CD4-positive, alpha-beta T cell (primary cell): ENCODE measurements at regions of chr5 and their contacts with region 1.

Region 1: GRCh38 chr5:39132128-39132447 is 57.9 kb upstream of the RICTOR start:
- DNase-seq: no peak
- ATAC-seq: no peak
- H3K4me3 ChIP-seq: no peak overlapping the region
- H3K4me3 Mint-ChIP-seq: no peak overlapping the region
- H3K27ac ChIP-seq: no peak overlapping the region
- H3K27ac Mint-ChIP-seq: peak overlapping the region; percentile 74
- H3K4me1 ChIP-seq: peaks cover 3% of the 10 kb centered on the region
- H3K4me1 Mint-ChIP-seq: peaks cover 78% of the 10 kb centered on the region
- H3K27me3 ChIP-seq: no peaks in the 10 kb centered on the region
- H3K27me3 Mint-ChIP-seq: no peaks in the 10 kb centered on the region
- CTCF ChIP-seq: no peak

Region 2: GRCh38 chr5:38948501-38948900 is 183.6 kb before region 1 on chr5:
- CTCF ChIA-PET with region 1: no interaction called
- POLR2A ChIA-PET with region 1: no interaction called
- intact Hi-C with region 1: loop called (anchors 5 kb)
- DNase-seq: no peak
- ATAC-seq: no peak
- H3K4me3 ChIP-seq: no peak overlapping the region
- H3K4me3 Mint-ChIP-seq: no peak overlapping the region
- H3K27ac ChIP-seq: no peak overlapping the region
- H3K27ac Mint-ChIP-seq: no peak overlapping the region
- H3K4me1 ChIP-seq: no peaks in the 10 kb centered on the region
- H3K4me1 Mint-ChIP-seq: no peaks in the 10 kb centered on the region
- H3K27me3 ChIP-seq: no peaks in the 10 kb centered on the region
- H3K27me3 Mint-ChIP-seq: no peaks in the 10 kb centered on the region
- CTCF ChIP-seq: no peak

Region 3: DNA sequence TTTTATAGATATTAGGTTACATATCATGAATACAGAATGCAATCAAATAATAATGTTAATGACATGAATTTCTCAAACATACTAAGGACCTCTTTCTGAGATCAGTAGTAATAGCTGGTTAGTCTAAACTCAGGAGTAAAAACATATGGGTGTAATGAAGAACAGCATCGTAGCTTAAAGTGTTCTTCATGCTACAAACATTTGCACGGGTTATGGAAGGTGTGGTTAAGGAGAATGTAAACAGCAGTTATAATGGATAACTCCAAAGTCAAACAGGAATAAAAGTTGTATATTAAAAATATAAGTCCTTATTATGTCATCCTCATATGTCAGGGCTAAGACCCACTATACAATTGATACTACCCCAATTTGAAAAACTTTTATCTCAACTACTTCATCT is 170.4 kb before region 1 on chr5:
- CTCF ChIA-PET with region 1: no interaction called
- POLR2A ChIA-PET with region 1: no interaction called
- intact Hi-C with region 1: loop called in 1 of 2 experiments (anchors 5 kb)
- DNase-seq: no peak
- ATAC-seq: no peak
- H3K4me3 ChIP-seq: no peak overlapping the region
- H3K4me3 Mint-ChIP-seq: no peak overlapping the region
- H3K27ac ChIP-seq: no peak overlapping the region
- H3K27ac Mint-ChIP-seq: no peak overlapping the region
- H3K4me1 ChIP-seq: no peaks in the 10 kb centered on the region
- H3K4me1 Mint-ChIP-seq: no peaks in the 10 kb centered on the region
- H3K27me3 ChIP-seq: no peaks in the 10 kb centered on the region
- H3K27me3 Mint-ChIP-seq: no peaks in the 10 kb centered on the region
- CTCF ChIP-seq: no peak

Region 4: DNA sequence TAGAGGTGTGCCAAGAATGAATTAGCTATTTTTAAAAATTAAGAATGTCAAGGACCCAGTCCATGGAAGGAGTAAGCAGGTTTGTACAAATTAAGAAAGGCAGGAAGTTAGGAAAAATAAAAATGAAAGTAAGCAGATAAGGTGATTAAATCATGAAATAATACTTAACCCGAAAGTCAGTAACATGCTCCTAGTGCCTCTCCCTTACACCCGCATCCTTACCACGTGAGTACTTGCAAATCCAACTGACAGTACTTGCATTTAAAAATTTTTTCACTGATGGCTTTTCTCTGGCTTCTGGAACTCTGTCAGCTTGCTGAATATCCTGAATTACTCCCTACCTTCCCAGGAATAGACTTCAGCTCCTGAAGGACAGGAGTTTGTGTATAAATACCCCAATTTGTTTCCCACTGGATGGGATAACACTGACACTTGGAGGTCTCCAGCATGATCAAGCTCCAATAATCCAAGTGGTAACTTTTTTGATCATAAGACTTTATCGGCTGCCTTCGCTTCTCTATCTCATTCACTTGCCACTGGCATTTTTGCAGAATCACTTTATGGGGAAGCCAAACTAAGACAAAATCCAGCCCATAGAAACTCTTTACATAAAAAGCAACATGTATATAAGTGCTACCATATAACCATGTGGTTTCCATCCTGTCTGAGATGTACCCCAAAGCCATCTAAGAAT is 16.3 kb before region 1 on chr5:
- CTCF ChIA-PET with region 1: interaction called, 4 read pairs
- POLR2A ChIA-PET with region 1: interaction called, 3 read pairs
- intact Hi-C with region 1: loop called in 1 of 2 experiments (anchors 2 kb)
- DNase-seq: no peak
- ATAC-seq: no peak
- H3K4me3 ChIP-seq: no peak overlapping the region
- H3K4me3 Mint-ChIP-seq: no peak overlapping the region
- H3K27ac ChIP-seq: no peak overlapping the region
- H3K27ac Mint-ChIP-seq: peak overlapping the region; percentile 60
- H3K4me1 ChIP-seq: no peaks in the 10 kb centered on the region
- H3K4me1 Mint-ChIP-seq: peaks cover 45% of the 10 kb centered on the region
- H3K27me3 ChIP-seq: no peaks in the 10 kb centered on the region
- H3K27me3 Mint-ChIP-seq: no peaks in the 10 kb centered on the region
- CTCF ChIP-seq: no peak

Region 5: GRCh38 chr5:39249564-39250274 is 117.6 kb after region 1 on chr5:
- CTCF ChIA-PET with region 1: no interaction called
- POLR2A ChIA-PET with region 1: no interaction called
- intact Hi-C with region 1: no loop called
- DNase-seq: no peak
- ATAC-seq: no peak
- H3K4me3 ChIP-seq: no peak overlapping the region
- H3K4me3 Mint-ChIP-seq: no peak overlapping the region
- H3K27ac ChIP-seq: no peak overlapping the region
- H3K27ac Mint-ChIP-seq: no peak overlapping the region
- H3K4me1 ChIP-seq: no peaks in the 10 kb centered on the region
- H3K4me1 Mint-ChIP-seq: no peaks in the 10 kb centered on the region
- H3K27me3 ChIP-seq: no peaks in the 10 kb centered on the region
- H3K27me3 Mint-ChIP-seq: no peaks in the 10 kb centered on the region
- CTCF ChIP-seq: no peak

Region 6: DNA sequence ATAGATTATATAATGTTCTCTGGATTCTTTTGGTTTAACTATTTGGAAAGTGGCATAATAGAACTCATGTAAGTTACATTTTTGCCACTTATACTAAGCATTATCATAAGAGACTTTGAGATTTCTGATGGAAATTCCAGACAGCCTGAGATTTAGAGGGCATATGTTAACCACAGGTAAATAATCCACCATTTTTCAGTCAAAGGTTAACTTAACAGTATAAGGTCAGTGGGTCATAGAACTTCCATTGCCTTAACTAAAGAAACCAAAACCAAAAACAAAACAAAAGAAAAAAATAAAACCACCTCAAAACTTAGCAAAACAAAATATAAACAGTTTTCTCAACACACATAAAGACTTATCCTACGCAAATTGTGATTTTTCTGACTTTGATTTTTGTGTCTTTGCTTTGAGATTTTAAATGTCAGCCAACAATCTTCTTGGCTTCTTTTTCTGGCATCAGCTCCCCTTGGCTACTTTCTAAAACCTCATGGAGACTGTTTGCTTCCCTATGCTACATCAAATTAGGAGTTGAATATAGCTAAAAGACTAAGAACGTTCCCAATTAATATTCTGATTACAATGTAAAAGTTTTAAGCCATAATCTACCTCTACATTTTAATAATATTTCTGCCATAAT is 722.8 kb after region 1 on chr5:
- CTCF ChIA-PET with region 1: no interaction called
- POLR2A ChIA-PET with region 1: no interaction called
- intact Hi-C with region 1: no loop called
- DNase-seq: no peak
- ATAC-seq: no peak
- H3K4me3 ChIP-seq: no peak overlapping the region
- H3K4me3 Mint-ChIP-seq: no peak overlapping the region
- H3K27ac ChIP-seq: no peak overlapping the region
- H3K27ac Mint-ChIP-seq: no peak overlapping the region
- H3K4me1 ChIP-seq: no peaks in the 10 kb centered on the region
- H3K4me1 Mint-ChIP-seq: no peaks in the 10 kb centered on the region
- H3K27me3 ChIP-seq: peaks cover 0 to 8% of the 10 kb centered on the region in 2 experiments
- H3K27me3 Mint-ChIP-seq: peaks cover 24% of the 10 kb centered on the region
- CTCF ChIP-seq: no peak